ENCODE measurements at regions of chr4 and their contacts with region 1.

Region 1: DNA sequence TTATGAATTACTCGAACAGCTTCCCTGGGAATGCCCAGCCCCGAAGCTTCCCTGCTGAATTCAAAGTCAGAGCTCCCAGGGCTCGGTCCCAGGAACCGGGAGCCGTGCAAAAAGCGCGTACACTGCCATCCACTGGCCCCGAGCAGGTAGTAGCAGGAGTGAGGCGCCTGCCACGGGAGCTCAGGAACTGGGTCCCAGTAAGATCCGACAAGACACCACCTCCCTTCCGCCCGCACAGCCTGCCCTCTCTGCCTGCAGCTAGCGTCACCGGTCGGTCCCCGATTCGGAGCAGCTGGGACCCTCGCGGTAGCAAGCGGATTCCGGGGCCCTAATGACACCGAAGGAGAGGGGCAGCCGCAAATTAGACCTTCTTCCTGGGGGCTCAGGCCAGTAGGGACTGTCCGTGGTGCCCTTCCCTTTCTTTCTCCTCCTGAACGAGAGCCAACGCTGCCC is 1.2 kb downstream of the CORIN start:
- H3K4me3 ChIP-seq: peak overlapping the region; percentile 58
- H3K27ac ChIP-seq: no peak overlapping the region
- H3K4me1 ChIP-seq: no peaks in the 10 kb centered on the region
- CTCF ChIP-seq: no peak; the same call in 1 of the 2 replicates

Region 2: GRCh38 chr4:47686294-47686872 is 150.3 kb before region 1 on chr4:
- CTCF ChIA-PET with region 1: interaction called, 13 read pairs
- POLR2A ChIA-PET with region 1: no interaction called
- H3K4me3 ChIP-seq: no peak overlapping the region
- H3K27ac ChIP-seq: no peak overlapping the region
- H3K4me1 ChIP-seq: no peaks in the 10 kb centered on the region
- CTCF ChIP-seq: peak; percentile 40; the same call in 1 of the 2 replicates

Region 3: DNA sequence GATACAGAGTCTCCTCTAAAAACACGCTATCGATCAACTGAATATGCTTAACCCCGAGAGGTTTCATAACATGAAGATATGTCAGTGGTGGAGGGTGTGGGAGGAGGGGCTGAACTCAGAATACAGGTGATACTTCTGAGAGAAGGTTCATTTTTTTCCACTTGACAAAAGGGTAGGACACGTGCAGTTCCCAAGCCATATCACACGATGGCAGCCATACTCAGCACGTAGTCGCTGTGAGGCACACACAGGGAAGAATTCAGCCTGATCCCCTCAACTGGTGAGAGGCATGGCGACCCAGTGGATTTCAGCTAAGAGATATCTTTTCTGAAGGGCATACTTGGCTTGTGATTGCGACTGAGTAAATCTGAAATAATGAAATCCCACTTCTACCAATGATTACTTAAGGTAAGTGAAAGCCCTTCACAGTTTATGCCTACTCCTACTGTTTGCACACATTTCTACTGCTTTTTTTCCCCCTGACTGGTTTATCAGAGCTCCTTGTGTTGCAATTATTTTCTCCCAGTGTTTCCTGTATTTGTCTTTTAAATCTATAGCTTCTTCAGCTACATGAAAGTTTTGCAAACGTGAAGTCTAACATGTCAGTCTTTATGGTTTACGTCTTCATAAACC is 131.9 kb before region 1 on chr4:
- CTCF ChIA-PET with region 1: interaction called, 46 read pairs
- POLR2A ChIA-PET with region 1: no interaction called
- H3K4me3 ChIP-seq: no peak overlapping the region
- H3K27ac ChIP-seq: no peak overlapping the region
- H3K4me1 ChIP-seq: no peaks in the 10 kb centered on the region
- CTCF ChIP-seq: peak; percentile 54

Region 4: DNA sequence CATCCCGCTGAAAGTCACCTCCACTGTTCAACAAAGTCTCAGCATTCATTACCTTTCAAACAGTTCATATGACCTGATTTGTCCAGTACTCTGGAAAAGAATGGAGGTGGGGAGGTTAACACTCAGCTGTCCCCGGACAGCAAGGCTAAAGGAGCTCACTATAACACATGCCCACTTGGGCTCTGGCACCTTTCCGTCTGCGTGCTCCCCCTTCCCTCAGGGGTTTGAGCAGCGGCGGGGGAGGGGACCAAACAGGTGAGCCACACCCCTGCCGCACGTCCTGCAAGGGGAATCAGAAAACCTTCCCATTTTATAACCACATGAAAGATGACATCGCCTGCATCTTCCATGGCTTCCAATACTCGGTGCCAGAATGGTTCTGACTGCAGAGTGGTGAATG is 117.6 kb after region 1 on chr4:
- CTCF ChIA-PET with region 1: no interaction called
- POLR2A ChIA-PET with region 1: no interaction called
- H3K4me3 ChIP-seq: no peak overlapping the region
- H3K27ac ChIP-seq: no peak overlapping the region
- H3K4me1 ChIP-seq: no peaks in the 10 kb centered on the region
- CTCF ChIP-seq: no peak